HCT116 (cell line): ENCODE measurements at regions of chr9 and their contacts with region 1.

Region 1: DNA sequence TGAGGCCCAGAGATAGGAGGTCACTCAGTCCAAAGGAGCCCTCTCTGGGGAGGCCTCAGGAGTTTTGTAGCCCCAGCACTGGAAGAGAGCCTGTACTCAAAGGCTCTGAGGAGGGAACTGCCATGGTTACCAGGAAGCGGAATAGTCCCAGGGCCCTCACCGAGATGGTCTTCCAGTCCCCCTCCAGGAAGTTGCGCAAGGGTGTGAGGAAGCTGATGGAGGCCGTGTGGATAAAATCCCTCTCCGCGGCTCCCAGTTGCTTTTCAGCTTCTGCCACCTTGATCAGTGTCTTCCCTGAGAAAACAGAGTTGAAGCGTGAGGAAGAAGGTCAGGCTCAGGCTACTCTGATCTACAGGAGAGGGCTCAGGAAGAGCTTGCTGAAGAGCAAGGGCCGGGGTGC is 13.5 kb downstream of the SH3GLB2 start:
- DNase-seq: no peak
- ATAC-seq: no peak
- H3K4me3 ChIP-seq: no peak overlapping the region
- H3K27ac ChIP-seq: no peak overlapping the region
- H3K4me1 ChIP-seq: no peaks in the 10 kb centered on the region
- H3K27me3 ChIP-seq: no peaks in the 10 kb centered on the region
- CTCF ChIP-seq: no peak
- POLR2A ChIP-seq: no peak
- RAD21 ChIP-seq: no peak

Region 2: DNA sequence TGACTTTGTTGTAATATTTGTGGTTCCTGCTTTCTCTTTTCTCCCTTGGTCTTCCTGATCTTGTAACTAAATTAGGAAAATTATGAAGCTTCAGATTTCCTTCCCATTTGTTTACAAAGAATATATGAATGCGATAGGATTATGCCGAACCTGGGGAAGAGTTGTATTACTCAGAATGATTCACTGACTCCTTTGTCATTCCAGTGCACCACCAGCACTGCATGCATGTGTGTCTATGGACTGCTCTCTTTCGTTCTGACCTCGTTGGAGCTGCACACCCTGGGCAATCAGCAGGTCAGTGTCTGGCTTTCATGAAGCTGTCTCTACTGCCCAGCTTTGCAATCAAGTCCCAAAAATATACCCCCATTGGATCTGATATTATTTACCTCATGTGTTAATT is 41.7 kb before region 1 on chr9:
- CTCF ChIA-PET with region 1: no interaction called
- POLR2A ChIA-PET with region 1: no interaction called
- RAD21 ChIA-PET with region 1: no interaction called
- intact Hi-C with region 1: loop called (anchors 5 kb)
- DNase-seq: no peak
- ATAC-seq: no peak
- H3K4me3 ChIP-seq: no peak overlapping the region
- H3K27ac ChIP-seq: no peak overlapping the region
- H3K4me1 ChIP-seq: no peaks in the 10 kb centered on the region
- H3K27me3 ChIP-seq: no peaks in the 10 kb centered on the region
- CTCF ChIP-seq: no peak
- POLR2A ChIP-seq: no peak
- RAD21 ChIP-seq: no peak

Region 3: DNA sequence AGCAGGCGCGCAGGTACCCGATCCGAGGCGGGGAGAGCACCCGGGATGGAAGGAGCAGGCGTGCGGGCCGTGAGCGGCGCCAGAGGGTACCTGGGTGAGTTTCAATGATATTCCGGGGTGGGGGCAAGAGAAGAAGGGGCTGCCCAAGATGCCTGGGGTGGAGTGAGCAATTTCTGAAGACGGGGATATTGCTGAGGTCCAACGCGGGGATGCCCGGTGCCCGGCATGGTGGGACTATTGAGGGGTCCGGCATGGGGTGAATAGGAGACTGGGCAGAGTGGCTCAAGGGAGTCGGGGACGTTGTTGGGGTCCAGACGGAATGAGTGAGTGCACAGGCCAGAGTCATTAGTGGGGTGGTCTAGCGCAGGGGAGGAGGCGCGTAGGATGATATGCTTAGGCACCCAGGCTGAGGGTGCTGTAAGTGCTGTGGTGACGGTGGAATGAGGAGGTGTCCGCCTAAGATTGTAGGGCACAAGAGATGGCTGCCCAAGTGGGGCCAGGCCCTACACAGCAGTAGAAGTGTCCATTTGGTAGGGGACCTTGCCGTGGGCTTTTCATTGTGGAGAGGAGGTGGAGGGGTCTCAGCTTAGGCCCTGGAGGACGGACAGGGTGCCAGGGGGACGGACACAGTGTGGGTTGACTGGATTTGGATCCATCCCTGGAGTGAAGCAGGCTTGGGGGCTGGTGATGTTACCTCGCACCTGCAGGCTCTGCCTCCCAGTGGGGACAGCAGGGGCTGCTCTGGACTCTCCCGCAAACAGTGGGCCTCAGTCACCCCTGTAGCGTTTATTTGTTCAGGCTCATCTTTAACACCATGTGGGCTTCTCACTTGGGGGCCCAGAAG is 22.5 kb after region 1 on chr9:
- CTCF ChIA-PET with region 1: no interaction called
- POLR2A ChIA-PET with region 1: no interaction called
- RAD21 ChIA-PET with region 1: no interaction called
- intact Hi-C with region 1: no loop called
- DNase-seq: no peak
- ATAC-seq: no peak
- H3K4me3 ChIP-seq: peak overlapping the region; percentile 96 to 99
- H3K27ac ChIP-seq: peak overlapping the region; percentile 54
- H3K4me1 ChIP-seq: peaks cover 9 to 20% of the 10 kb centered on the region in 2 experiments; a peak in 2 of 4 replicates
- H3K27me3 ChIP-seq: no peaks in the 10 kb centered on the region
- CTCF ChIP-seq: no peak
- POLR2A ChIP-seq: no peak
- RAD21 ChIP-seq: no peak